ENCODE measurements at regions of chr1 and their contacts with region 1.

Region 1: GRCh38 chr1:149962123-149962548 is 25.5 kb upstream of the MTMR11 start:
- DNase-seq: peak; percentile 84
- H3K4me3 Mint-ChIP-seq: no peak overlapping the region
- H3K27ac Mint-ChIP-seq: no peak overlapping the region
- H3K4me1 Mint-ChIP-seq: peaks cover 18% of the 10 kb centered on the region
- H3K27me3 Mint-ChIP-seq: no peaks in the 10 kb centered on the region

Region 2: GRCh38 chr1:149997585-149998262 is 35.6 kb after region 1 on chr1:
- intact Hi-C with region 1: loop called (anchors 5 kb)
- DNase-seq: no peak
- H3K4me3 Mint-ChIP-seq: peak overlapping the region; percentile 38
- H3K27ac Mint-ChIP-seq: peak overlapping the region; percentile 75
- H3K4me1 Mint-ChIP-seq: peaks cover 50% of the 10 kb centered on the region
- H3K27me3 Mint-ChIP-seq: no peaks in the 10 kb centered on the region

Region 3: DNA sequence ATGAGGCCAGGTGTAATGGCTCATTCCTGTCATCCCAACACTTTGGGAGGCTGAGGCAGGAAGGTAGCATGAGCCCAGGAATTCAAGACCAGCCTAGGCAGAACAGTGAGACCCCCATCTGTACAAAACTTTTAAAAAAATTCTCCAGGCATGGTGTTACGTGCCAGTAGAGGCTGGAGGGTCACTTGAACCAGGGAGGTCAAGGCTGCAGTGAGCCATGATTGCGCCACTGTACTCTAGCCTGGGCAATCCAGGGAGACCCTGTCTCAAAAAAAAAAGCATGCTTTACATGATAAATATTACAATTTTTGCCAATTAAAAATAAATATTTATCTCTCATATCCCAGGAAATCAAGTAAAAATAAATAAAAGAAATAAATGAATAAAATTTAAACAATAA is 87.8 kb after region 1 on chr1:
- intact Hi-C with region 1: loop called (anchors 1 kb)
- DNase-seq: no peak
- H3K4me3 Mint-ChIP-seq: no peak overlapping the region
- H3K27ac Mint-ChIP-seq: no peak overlapping the region
- H3K4me1 Mint-ChIP-seq: peaks cover 3% of the 10 kb centered on the region
- H3K27me3 Mint-ChIP-seq: peaks cover 17% of the 10 kb centered on the region

Region 4: DNA sequence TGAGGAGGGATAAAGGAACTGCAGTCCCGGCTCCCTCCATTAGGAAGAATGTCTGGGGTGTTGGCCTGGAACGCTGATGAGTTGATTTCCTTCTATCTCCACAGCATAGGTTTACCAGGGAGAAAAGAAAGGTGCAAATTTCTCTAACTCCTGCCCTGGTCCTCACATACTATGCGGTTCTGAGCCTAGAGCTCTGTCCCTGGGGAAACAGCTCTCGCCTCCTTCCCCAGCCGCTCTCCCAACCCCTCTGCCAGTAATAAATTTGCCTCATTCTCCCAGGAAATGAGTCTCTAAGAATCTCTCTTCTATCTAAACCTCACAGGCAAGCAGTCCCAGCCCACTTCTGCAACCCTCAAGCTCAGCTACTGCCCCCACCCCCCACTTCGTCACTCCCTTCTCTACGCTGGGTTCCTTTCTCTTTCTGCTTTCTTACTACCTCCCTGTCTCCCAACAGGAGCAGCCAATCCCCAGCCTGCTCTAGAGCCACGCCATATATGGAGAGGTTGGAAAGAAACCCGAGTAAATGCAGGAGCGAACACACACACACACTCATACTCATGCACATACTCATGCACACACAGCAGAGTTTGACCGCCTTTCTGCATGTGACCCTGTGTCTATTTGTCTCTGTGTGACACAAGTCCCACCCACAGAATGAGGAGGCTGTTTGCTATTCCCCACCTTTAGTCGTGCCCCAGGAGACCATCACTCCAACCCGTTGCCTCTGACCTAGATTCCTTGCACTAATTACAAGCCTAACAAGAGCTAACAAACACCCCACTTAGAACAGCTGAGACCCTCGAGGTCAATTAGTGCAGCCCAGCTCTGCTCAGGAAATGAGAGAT is 200.9 kb after region 1 on chr1:
- intact Hi-C with region 1: loop called (anchors 10 kb)
- DNase-seq: peak; percentile 70
- H3K4me3 Mint-ChIP-seq: peak overlapping the region; percentile 3
- H3K27ac Mint-ChIP-seq: no peak overlapping the region
- H3K4me1 Mint-ChIP-seq: peaks cover 42% of the 10 kb centered on the region
- H3K27me3 Mint-ChIP-seq: peaks cover 4% of the 10 kb centered on the region